ENCODE measurements at regions of chr7 and their contacts with region 1.

Region 1: GRCh38 chr7:27112955-27113949 is 10.8 kb upstream of the HOXA2 start:
- DNase-seq: peak; percentile 56 to 90
- ATAC-seq: peak; percentile 60
- H3K4me3 ChIP-seq: peak overlapping the region; percentile 72
- H3K27ac ChIP-seq: peak overlapping the region; percentile 92 to 98
- H3K4me1 ChIP-seq: peaks cover 49% of the 10 kb centered on the region
- CTCF ChIP-seq: no peak
- EP300 ChIP-seq: no peak
- POLR2A ChIP-seq: peak; percentile 8
- RAD21 ChIP-seq: 0 out of 5 replicates have a peak, but pooled peaks of 1 of the 2 experiments have one; percentile 21

Region 2: DNA sequence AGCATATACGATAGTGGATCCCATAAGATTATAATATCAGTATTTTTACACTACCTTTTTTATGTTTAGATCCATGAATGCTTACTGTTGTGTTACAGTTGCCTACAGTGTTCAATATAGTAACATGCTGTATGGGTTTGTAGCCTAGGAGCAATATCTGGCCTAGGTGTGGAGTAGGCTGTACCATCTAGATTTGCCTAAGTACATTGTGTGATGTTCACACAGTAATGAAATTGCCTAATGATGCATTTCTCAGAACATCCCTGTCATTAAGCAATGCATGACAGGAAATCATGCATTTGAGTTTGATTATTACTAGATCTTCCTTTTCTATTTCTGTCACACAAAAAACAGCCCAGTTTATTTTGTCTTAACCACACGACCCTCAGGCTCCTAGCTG is 897.2 kb before region 1 on chr7:
- CTCF ChIA-PET with region 1: no interaction called
- POLR2A ChIA-PET with region 1: interaction called, 10 read pairs
- DNase-seq: no peak
- ATAC-seq: peak; percentile 48 to 50; a peak in 4 of 6 replicates
- H3K4me3 ChIP-seq: no peak overlapping the region
- H3K27ac ChIP-seq: no peak overlapping the region
- H3K4me1 ChIP-seq: no peaks in the 10 kb centered on the region
- CTCF ChIP-seq: no peak
- EP300 ChIP-seq: no peak
- POLR2A ChIP-seq: no peak
- RAD21 ChIP-seq: no peak

Region 3: DNA sequence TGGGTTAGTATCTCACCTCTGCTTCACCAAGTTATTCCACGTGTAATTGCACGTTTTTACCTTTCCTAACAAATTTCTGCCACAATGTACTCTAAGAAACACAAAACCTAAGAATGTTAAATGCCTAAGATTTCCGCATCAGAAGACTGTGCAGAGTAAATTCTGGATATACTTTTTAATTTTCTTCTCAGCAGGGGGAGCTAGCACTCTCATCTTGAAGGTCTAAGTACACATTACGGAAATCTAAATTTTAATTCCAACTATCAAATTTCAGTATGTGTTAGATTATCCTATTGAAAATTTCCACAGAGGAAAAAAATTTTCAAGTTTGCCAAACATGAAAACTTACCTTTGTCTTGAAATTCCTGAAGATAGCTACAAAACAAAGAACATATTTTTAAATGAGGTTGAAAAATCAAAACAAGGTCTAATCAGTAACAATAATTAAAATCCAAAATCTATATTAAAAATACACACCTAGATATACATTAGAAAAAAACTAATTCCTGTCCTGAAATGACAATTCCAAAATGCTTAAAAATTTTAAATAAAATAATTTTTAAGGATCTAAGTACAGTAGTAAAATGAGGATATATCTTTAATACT is 259.4 kb before region 1 on chr7:
- CTCF ChIA-PET with region 1: interaction called, 18 read pairs
- POLR2A ChIA-PET with region 1: no interaction called
- DNase-seq: peak in 1 of 2 experiments; percentile 67
- ATAC-seq: peak; percentile 78 to 86; a peak in 5 of 6 replicates
- H3K4me3 ChIP-seq: no peak overlapping the region
- H3K27ac ChIP-seq: no peak overlapping the region
- H3K4me1 ChIP-seq: peaks cover 9% of the 10 kb centered on the region
- CTCF ChIP-seq: peak; percentile 86
- EP300 ChIP-seq: no peak
- POLR2A ChIP-seq: no peak
- RAD21 ChIP-seq: peak; percentile 79 to 80

Region 4: GRCh38 chr7:26864309-26865093 is 248.8 kb before region 1 on chr7 and contains the start of gene SKAP2:
- CTCF ChIA-PET with region 1: no interaction called
- POLR2A ChIA-PET with region 1: interaction called, 34 read pairs
- DNase-seq: peak; percentile 93 to 99
- ATAC-seq: peak; percentile 96 to 98
- H3K4me3 ChIP-seq: peak within 1 kb of the TSS; percentile 81
- H3K27ac ChIP-seq: peak within 1 kb of the TSS; percentile 90 to 92
- H3K4me1 ChIP-seq: peaks cover 17% of the 10 kb centered on the region; the same call in 2 of the 3 replicates
- CTCF ChIP-seq: no peak
- EP300 ChIP-seq: no peak
- POLR2A ChIP-seq: peak; percentile 70
- RAD21 ChIP-seq: no peak
- polyA plus RNA-seq, gene SKAP2: 22.1 and 23.0 TPM in 2 replicates

Region 5: DNA sequence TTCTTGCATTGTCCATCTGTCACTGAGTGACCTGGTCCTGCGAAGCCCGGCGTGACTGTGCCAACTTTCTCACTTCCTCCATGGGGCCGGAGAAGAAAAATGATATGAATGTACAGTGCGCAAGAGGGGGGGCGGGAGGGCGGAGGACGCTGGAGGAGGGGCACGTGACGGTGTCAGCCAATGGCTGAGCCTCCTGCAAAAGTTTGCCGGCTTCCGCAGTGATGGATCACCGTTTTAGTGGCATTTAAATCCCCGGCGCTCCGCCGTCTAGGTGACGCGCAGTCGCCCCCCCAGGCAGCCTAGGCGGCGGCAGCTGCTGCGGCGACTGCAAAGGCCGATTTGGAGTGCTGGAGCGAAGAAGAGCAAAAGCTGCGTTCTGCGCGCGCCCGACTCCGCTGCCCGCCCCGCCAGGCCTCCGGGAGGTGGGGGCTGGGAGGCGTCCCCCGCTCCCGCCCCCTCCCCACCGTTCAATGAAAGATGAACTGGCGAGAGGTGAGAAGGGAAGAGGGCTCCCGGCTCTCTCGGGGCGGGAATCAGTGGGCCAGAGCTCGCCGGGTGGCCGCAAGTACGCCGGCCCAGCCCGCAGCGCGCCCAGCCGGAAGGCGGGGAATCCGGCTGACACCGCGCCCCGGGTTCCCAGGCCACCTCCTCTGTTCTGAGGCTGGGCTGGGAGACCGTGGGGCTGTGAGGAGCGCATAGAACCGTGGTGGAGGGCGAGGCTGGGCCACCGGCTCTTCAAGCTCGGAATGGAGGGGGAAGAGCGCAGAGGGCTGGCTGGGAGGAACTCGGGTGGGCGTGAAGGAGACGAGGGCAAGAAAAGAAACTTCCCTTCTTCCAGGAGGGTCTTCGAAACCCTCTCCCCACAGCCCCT is 17.1 kb before region 1 on chr7 and contains the start of gene HOXA1:
- CTCF ChIA-PET with region 1: interaction called, 17 read pairs
- POLR2A ChIA-PET with region 1: interaction called, 20 read pairs
- DNase-seq: peak; percentile 91 to 99
- ATAC-seq: peak; percentile 89 to 91
- H3K4me3 ChIP-seq: peak within 1 kb of the TSS; percentile 91
- H3K27ac ChIP-seq: peak within 1 kb of the TSS; percentile 91 to 93
- H3K4me1 ChIP-seq: peaks cover 19% of the 10 kb centered on the region
- CTCF ChIP-seq: no peak
- EP300 ChIP-seq: no peak
- POLR2A ChIP-seq: peak; percentile 61
- RAD21 ChIP-seq: peak in 1 of 2 experiments; percentile 39; a peak in 3 of 5 replicates
- polyA plus RNA-seq, gene HOXA1: 4.8 and 5.0 TPM in 2 replicates

Region 6: GRCh38 chr7:27130540-27131389 is 17.5 kb after region 1 on chr7 and contains the start of gene HOXA4:
- CTCF ChIA-PET with region 1: interaction called, 8 read pairs
- POLR2A ChIA-PET with region 1: interaction called, 13 read pairs
- DNase-seq: peak in 1 of 2 experiments; percentile 84
- ATAC-seq: peak; percentile 87 to 88
- H3K4me3 ChIP-seq: peak within 1 kb of the TSS; percentile 54
- H3K27ac ChIP-seq: peak within 1 kb of the TSS; percentile 82 to 95
- H3K4me1 ChIP-seq: peaks cover 31% of the 10 kb centered on the region
- CTCF ChIP-seq: no peak
- EP300 ChIP-seq: no peak
- POLR2A ChIP-seq: peak; percentile 17; the same call in 1 of the 2 replicates
- RAD21 ChIP-seq: no peak
- polyA plus RNA-seq, gene HOXA4: 2.6 and 2.8 TPM in 2 replicates

Region 7: DNA sequence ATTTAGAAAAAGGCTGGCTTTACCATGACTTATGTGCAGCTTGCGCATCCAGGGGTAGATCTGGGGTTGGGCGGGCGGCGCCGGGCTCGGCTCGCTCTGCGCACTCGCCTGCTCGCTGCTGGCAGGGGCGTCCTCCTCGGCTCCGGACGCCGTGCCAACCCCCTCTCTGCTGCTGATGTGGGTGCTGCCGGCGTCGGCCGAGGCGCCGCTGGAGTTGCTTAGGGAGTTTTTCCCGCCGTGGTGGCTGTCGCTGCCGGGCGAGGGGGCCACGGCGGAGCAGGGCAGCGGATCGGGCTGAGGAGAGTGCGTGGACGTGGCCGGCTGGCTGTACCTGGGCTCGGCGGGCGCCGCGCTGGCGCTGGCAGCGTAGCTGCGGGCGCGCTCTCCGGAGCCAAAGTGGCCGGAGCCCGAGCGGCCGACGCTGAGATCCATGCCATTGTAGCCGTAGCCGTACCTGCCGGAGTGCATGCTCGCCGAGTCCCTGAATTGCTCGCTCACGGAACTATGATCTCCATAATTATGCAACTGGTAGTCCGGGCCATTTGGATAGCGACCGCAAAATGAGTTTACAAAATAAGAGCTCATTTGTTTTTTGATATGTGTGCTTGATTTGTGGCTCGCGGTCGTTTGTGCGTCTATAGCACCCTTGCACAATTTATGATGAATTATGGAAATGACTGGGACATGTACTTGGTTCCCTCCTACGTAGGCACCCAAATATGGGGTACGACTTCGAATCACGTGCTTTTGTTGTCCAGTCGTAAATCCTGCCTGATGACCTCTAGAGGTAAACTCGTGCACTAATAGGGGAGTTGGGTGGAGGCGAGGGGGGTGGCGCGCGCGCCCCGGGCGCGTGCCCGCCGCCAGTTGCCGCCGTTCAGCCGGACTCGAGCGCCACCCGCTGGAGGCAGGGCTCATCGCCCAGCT is 30.0 kb after region 1 on chr7 and contains the start of gene HOXA5:
- CTCF ChIA-PET with region 1: interaction called, 6 read pairs
- POLR2A ChIA-PET with region 1: interaction called, 12 read pairs
- DNase-seq: peak; percentile 95 to 96
- ATAC-seq: peak; percentile 78 to 85
- H3K4me3 ChIP-seq: peak within 1 kb of the TSS; percentile 72
- H3K27ac ChIP-seq: peak within 1 kb of the TSS; percentile 79 to 93
- H3K4me1 ChIP-seq: peaks cover 5% of the 10 kb centered on the region; the same call in 2 of the 3 replicates
- CTCF ChIP-seq: peak; percentile 88
- EP300 ChIP-seq: no peak
- POLR2A ChIP-seq: no peak
- RAD21 ChIP-seq: peak; percentile 73 to 91
- polyA plus RNA-seq, gene HOXA5: 6.3 and 6.5 TPM in 2 replicates

Region 8: GRCh38 chr7:27295236-27295635 is 182.0 kb after region 1 on chr7:
- CTCF ChIA-PET with region 1: no interaction called
- POLR2A ChIA-PET with region 1: no interaction called
- DNase-seq: no peak
- ATAC-seq: no peak
- H3K4me3 ChIP-seq: no peak overlapping the region
- H3K27ac ChIP-seq: no peak overlapping the region
- H3K4me1 ChIP-seq: no peaks in the 10 kb centered on the region
- CTCF ChIP-seq: no peak
- EP300 ChIP-seq: no peak
- POLR2A ChIP-seq: no peak
- RAD21 ChIP-seq: no peak

Measured in A549 (cell line).